ENCODE measurements at regions of chr12 and their contacts with region 1.

Region 1: GRCh38 chr12:49130151-49131050 is 794 bp downstream of the TUBA1B start:
- DNase-seq: peak; percentile 79 to 97 (median 87)
- ATAC-seq: peak; percentile 74
- H3K4me3 ChIP-seq: peak overlapping the region; percentile 84
- H3K27ac ChIP-seq: peak overlapping the region; percentile 96
- H3K4me1 ChIP-seq: peaks cover 17 to 27% of the 10 kb centered on the region in 2 experiments; a peak in 4 of 5 replicates
- H3K27me3 ChIP-seq: no peaks in the 10 kb centered on the region
- CTCF ChIP-seq: peak; percentile 89 to 96 (median 89)
- EP300 ChIP-seq: peak; percentile 62; the same call in 1 of the 2 replicates
- POLR2A ChIP-seq: no peak
- RAD21 ChIP-seq: peak; percentile 66 to 72

Region 2: DNA sequence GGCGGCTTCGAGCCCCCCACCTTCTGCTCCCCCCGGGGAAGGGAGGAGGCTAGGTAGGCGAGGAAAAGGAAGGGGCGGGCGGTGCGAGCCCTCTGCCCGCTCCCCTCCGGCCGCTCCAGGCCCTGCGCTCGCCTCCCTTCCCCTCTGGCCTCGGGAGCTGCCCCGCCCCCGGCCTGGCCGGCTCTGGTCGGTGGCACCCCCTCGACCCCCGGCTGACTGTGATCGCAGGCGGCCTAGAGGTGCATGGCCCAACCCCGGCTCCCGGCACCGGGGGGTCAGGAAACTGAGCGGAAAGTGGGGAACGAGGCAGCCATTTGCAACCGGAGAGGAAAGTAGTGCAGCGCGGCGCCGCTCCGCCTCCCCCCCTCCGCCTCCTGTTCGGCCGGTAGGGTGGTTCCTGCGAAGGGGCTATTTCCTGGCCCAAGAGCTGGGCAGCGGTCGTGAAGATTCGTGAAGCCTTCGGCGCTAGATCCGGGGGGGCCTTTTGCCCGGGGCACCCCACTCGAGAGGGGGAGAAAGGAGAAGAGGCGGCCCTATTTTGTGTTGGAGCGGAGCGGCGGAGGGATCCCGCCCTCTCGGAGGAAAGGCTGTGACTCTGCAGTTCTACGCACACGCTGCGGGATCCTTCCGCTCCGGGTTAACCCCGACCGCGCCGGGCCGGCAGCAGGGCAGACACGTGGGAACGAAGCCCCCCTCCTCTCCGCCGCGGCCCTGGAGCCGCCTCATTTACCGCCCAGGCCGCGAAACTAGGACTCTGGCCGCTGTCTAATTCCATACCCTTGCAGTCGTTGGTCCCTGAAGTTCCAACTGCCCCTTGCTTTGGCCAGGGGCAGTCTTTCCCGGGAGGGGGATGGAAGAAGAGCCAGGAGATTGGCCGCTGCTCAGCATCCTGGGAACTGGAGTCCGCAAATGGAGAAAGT is 69.9 kb before region 1 on chr12 and contains the start of gene KMT2D:
- CTCF ChIA-PET with region 1: interaction called, 5 read pairs
- POLR2A ChIA-PET with region 1: interaction called, 40 read pairs
- in situ Hi-C with region 1: no loop called
- intact Hi-C with region 1: loop called (anchors 5 kb)
- DNase-seq: peak; percentile 89 to 96 (median 91)
- ATAC-seq: peak; percentile 72
- H3K4me3 ChIP-seq: peak within 1 kb of the TSS; percentile 94
- H3K27ac ChIP-seq: peak within 1 kb of the TSS; percentile 98
- H3K4me1 ChIP-seq: peaks cover 15 to 20% of the 10 kb centered on the region in 2 experiments; a peak in 4 of 5 replicates
- H3K27me3 ChIP-seq: no peaks in the 10 kb centered on the region
- CTCF ChIP-seq: 0 out of 6 replicates have a peak, but pooled peaks of 2 of the 3 experiments have one; percentile 6 to 13
- EP300 ChIP-seq: peak; percentile 53; the same call in 1 of the 2 replicates
- POLR2A ChIP-seq: peak; percentile 88
- RAD21 ChIP-seq: no peak
- polyA plus RNA-seq, gene KMT2D: 0.22 to 1.4 TPM

Region 3: DNA sequence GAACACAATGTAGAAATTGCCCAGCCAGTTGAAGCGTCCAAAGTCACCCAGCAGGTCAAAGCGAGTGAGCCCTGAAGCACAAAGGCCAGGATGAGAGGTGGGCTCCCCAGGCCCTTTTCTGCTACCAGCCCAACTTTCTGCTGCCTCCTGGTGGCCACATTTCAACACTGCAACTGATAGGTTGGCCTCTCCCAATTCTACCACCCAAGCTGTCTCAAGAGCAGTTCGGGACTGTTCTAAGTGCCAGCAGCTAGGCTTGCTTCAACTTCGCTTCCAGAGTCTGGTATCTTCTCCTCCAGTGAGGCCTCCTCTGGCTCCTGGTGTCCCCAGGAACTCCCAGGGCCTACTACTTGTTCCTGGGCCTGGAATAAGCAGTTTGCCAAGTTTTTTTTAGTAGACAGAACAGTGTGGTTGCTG is 32.4 kb before region 1 on chr12:
- CTCF ChIA-PET with region 1: no interaction called
- POLR2A ChIA-PET with region 1: interaction called, 112 read pairs
- in situ Hi-C with region 1: no loop called
- intact Hi-C with region 1: no loop called
- DNase-seq: peak; percentile 68 to 78 (median 74)
- ATAC-seq: peak; percentile 76
- H3K4me3 ChIP-seq: no peak overlapping the region
- H3K27ac ChIP-seq: no peak overlapping the region; the same call in 2 of the 3 replicates
- H3K4me1 ChIP-seq: peaks cover 27 to 28% of the 10 kb centered on the region in 2 experiments
- H3K27me3 ChIP-seq: no peaks in the 10 kb centered on the region
- CTCF ChIP-seq: peak; percentile 86 to 94 (median 89)
- EP300 ChIP-seq: no peak
- POLR2A ChIP-seq: no peak
- RAD21 ChIP-seq: peak; percentile 64 to 85

Region 4: GRCh38 chr12:49146406-49146805 is 16.0 kb after region 1 on chr12:
- CTCF ChIA-PET with region 1: interaction called, 3 read pairs
- POLR2A ChIA-PET with region 1: interaction called, 151 read pairs
- in situ Hi-C with region 1: no loop called
- intact Hi-C with region 1: no loop called
- DNase-seq: no peak
- ATAC-seq: no peak
- H3K4me3 ChIP-seq: no peak overlapping the region
- H3K27ac ChIP-seq: no peak overlapping the region
- H3K4me1 ChIP-seq: peaks cover 0 to 4% of the 10 kb centered on the region in 2 experiments; a peak in 2 of 5 replicates
- H3K27me3 ChIP-seq: no peaks in the 10 kb centered on the region
- CTCF ChIP-seq: no peak
- EP300 ChIP-seq: no peak
- POLR2A ChIP-seq: no peak
- RAD21 ChIP-seq: no peak

Region 5: GRCh38 chr12:49188914-49189367 is 58.5 kb after region 1 on chr12 and contains the start of gene TUBA1A:
- CTCF ChIA-PET with region 1: no interaction called
- POLR2A ChIA-PET with region 1: interaction called, 19 read pairs
- in situ Hi-C with region 1: no loop called
- intact Hi-C with region 1: loop called (anchors 2 kb)
- DNase-seq: peak; percentile 53 to 73 (median 65)
- ATAC-seq: peak; percentile 82
- H3K4me3 ChIP-seq: peak within 1 kb of the TSS; percentile 86
- H3K27ac ChIP-seq: peak within 1 kb of the TSS; percentile 37; the same call in 2 of the 3 replicates
- H3K4me1 ChIP-seq: peaks cover 3 to 16% of the 10 kb centered on the region in 2 experiments
- H3K27me3 ChIP-seq: no peaks in the 10 kb centered on the region
- CTCF ChIP-seq: peak in 1 of 3 experiments; percentile 20; a peak in 1 of 6 replicates
- EP300 ChIP-seq: no peak
- POLR2A ChIP-seq: no peak
- RAD21 ChIP-seq: no peak
- polyA plus RNA-seq, gene TUBA1A: 23.7 to 24.2 TPM

Region 6: GRCh38 chr12:49244176-49244575 is 113.8 kb after region 1 on chr12:
- CTCF ChIA-PET with region 1: no interaction called
- POLR2A ChIA-PET with region 1: interaction called, 24 read pairs
- in situ Hi-C with region 1: no loop called
- intact Hi-C with region 1: no loop called
- DNase-seq: no peak
- ATAC-seq: no peak
- H3K4me3 ChIP-seq: no peak overlapping the region
- H3K27ac ChIP-seq: no peak overlapping the region; the same call in 2 of the 3 replicates
- H3K4me1 ChIP-seq: peaks cover 14 to 21% of the 10 kb centered on the region in 2 experiments
- H3K27me3 ChIP-seq: no peaks in the 10 kb centered on the region
- CTCF ChIP-seq: no peak
- EP300 ChIP-seq: no peak
- POLR2A ChIP-seq: no peak
- RAD21 ChIP-seq: no peak

Region 7: DNA sequence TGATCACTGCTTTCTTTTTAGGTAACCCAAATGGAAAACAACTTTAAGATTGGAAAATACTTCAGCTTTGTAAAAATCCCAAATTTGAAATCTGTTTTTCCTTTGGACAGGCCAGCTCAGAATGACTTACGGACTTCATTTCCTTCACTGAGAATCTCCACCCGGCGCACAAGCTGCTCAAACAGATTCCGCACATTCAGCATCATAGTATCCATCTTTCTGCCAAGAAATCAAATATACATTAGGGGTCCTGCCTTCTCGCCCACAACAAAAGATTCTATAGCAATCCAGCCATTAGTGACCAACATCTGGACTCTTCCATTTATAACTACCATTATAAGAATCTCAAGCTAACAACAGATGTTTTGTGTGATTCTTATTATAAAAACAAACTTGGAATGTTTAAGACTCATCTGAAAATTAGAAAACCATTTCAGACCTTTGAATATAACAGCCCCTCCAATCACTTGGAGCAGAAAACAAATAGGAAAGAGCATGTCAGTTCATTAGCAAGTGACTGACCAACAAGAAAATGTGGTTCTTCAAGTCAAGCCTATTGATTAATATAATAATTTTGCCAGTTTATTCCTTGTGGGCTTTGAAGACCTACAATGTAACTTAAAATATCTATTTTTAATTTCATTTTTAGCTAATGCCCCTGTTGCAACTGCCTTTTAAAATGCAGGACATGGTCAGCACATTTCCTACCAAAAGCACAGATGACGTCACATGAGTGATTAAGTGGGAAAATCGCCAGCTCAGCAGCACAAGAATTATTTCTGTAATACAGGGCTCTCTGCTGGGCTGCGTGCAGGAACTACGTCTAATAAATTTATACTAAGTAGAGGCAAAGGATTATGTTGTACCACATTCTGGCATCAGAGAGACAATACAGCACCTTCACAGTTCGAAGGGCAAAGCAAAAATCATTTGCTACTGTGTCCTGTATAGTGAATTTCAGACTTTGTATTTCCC is 886.4 kb after region 1 on chr12:
- CTCF ChIA-PET with region 1: no interaction called
- POLR2A ChIA-PET with region 1: no interaction called
- in situ Hi-C with region 1: no loop called
- intact Hi-C with region 1: no loop called
- DNase-seq: no peak
- ATAC-seq: no peak
- H3K4me3 ChIP-seq: no peak overlapping the region
- H3K27ac ChIP-seq: no peak overlapping the region
- H3K4me1 ChIP-seq: peaks cover 5 to 7% of the 10 kb centered on the region in 2 experiments; a peak in 3 of 5 replicates
- H3K27me3 ChIP-seq: no peaks in the 10 kb centered on the region
- CTCF ChIP-seq: no peak
- EP300 ChIP-seq: no peak
- POLR2A ChIP-seq: no peak
- RAD21 ChIP-seq: no peak

Region 8: GRCh38 chr12:50953045-50953444 is 1822.6 kb after region 1 on chr12:
- CTCF ChIA-PET with region 1: no interaction called
- POLR2A ChIA-PET with region 1: no interaction called
- in situ Hi-C with region 1: no loop called
- intact Hi-C with region 1: no loop called
- DNase-seq: no peak
- ATAC-seq: no peak
- H3K4me3 ChIP-seq: no peak overlapping the region
- H3K27ac ChIP-seq: no peak overlapping the region
- H3K4me1 ChIP-seq: peaks cover 0 to 5% of the 10 kb centered on the region in 2 experiments; a peak in 1 of 5 replicates
- H3K27me3 ChIP-seq: no peaks in the 10 kb centered on the region
- CTCF ChIP-seq: 0 out of 6 replicates have a peak, but pooled peaks of 1 of the 3 experiments have one; percentile 3
- EP300 ChIP-seq: no peak
- POLR2A ChIP-seq: no peak
- RAD21 ChIP-seq: no peak; a peak in 1 of 4 replicates

Measured in K562 (cell line).